ENCODE measurements at regions of chr4 and their contacts with region 1.

Region 1: GRCh38 chr4:105146276-105147015 is at the start of gene TET2:
- DNase-seq: peak; percentile 70

Region 2: GRCh38 chr4:105257826-105258495 is 111.5 kb after region 1 on chr4:
- CTCF ChIA-PET with region 1: no interaction called
- POLR2A ChIA-PET with region 1: no interaction called
- DNase-seq: no peak

Region 3: DNA sequence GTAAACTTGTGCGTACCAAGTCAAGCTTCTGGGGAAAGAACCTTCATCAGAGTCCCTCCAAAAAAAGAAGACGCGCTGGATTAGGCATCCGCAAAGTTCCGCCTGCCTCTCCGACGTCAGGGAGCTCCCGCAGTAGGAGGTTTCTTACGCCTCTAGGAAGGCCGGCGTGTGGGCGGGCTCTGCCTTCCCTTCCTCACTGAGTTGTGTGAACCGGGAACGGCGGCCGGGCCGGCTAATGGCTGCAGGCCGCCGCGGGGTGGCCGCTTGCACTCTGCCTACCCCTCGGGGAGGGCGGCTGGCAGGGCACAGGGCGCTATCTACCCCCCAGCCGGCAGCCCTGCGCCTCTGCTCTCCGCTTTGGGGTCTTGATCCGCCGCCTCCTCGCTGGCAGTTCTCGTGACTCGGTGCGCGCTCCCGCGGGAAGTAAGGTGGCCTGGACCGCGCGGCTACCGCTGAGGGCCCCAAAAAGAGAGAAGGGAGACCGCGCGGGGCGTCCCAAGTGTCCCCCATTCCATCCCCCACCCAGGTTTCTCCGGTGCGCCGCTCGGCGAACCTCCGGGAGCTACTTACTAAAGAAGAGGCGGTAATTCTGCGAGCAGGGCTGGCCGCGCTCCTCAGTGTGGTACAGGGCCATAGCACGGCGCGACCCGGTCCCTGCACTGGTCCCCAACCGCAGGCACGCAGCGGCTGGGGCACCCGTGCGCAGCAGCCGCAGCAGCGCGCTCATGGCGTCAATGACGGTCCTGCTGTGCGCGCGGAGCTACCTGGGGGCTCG is 327.1 kb after region 1 on chr4 and contains the start of gene PPA2:
- CTCF ChIA-PET with region 1: interaction called, 3 read pairs
- POLR2A ChIA-PET with region 1: interaction called, 15 read pairs
- DNase-seq: peak; percentile 68

Measured in HEK293T (cell line).